PC-9 (cell line): ENCODE measurements at regions of chr19 and their contacts with region 1.

Region 1: GRCh38 chr19:5231857-5232503 is 108.6 kb downstream of the PTPRS start:
- DNase-seq: no peak
- H3K4me3 ChIP-seq: no peak overlapping the region
- H3K27ac ChIP-seq: no peak overlapping the region
- H3K4me1 ChIP-seq: no peaks in the 10 kb centered on the region
- H3K27me3 ChIP-seq: no peaks in the 10 kb centered on the region
- CTCF ChIP-seq: no peak

Region 2: DNA sequence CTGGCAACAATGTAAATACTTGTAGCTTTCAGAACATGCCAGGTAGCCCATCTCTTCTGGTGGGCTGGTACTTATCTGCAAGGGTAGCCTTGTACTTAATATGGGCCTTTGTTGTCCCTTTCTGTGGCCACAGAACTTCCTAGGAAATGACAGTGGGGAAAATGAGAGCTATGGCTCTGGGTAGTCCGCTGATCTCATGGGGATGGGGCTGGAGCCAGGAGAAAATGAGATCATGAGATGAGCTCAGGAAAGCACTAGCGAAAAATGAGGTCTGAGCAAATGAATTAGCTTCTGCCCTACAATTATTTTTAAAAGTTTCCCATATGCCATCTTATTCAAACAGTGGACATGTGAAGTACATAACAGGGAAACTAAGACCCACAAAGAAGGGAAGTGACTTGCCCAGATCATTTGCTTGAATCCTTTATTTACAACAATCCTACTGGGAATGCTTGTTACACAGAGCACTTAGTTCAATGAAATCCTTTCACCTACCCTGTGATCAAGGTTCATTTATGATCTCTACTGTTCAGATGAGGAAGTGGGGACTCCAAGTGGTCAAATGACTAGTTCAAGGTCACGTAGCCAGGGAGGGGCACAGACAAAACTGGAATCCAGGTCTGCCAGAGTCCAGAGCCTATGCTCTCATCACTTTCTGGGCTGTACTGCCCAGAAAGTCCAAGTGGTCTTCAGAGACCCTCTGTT is 21.6 kb after region 1 on chr19:
- CTCF ChIA-PET with region 1: interaction called, 12 read pairs
- POLR2A ChIA-PET with region 1: interaction called, 14 read pairs
- intact Hi-C with region 1: no loop called
- DNase-seq: no peak
- H3K4me3 ChIP-seq: no peak overlapping the region
- H3K27ac ChIP-seq: no peak overlapping the region
- H3K4me1 ChIP-seq: no peaks in the 10 kb centered on the region
- H3K27me3 ChIP-seq: no peaks in the 10 kb centered on the region
- CTCF ChIP-seq: no peak